ENCODE measurements at regions of chr11 and their contacts with region 1.

Region 1: DNA sequence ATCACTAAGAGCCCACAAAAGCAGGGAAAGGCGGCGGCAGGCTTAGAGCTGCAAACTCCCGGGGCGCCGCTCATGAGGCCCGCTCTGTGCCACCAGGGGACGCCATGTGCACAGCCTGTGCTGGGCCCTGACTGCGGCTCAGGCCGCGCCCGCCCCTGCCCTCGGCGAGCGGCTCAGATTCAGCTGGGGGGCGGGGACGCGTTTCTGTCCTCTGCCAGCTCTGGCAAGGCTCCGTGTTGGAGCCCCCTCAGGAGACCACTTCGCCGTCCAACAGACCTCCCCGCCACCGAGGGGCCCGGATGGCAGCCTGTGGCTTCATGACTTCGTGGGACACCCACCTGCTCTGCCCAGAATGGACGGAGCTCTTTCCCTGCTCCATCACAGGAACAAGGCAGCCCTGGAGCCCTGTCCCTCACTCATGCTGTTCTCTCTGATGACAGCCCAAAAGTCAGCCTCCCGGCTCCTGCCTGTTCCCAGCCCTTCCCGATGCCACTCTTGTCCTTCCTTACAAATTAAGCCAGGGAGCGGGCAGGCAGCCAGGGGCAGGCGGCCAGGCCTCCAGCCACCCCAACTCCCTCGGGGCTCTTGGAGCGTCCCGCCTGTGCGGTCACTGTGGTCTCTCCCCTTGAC is 69.1 kb downstream of the NAT10 start:
- DNase-seq: peak; percentile 76
- ATAC-seq: peak; percentile 100
- H3K4me3 ChIP-seq: peak overlapping the region; percentile 58; the same call in 1 of the 2 replicates
- H3K27ac ChIP-seq: no peak overlapping the region
- H3K4me1 ChIP-seq: peaks cover 11% of the 10 kb centered on the region; the same call in 1 of the 2 replicates
- H3K27me3 ChIP-seq: no peaks in the 10 kb centered on the region
- CTCF ChIP-seq: peak; percentile 79

Region 2: DNA sequence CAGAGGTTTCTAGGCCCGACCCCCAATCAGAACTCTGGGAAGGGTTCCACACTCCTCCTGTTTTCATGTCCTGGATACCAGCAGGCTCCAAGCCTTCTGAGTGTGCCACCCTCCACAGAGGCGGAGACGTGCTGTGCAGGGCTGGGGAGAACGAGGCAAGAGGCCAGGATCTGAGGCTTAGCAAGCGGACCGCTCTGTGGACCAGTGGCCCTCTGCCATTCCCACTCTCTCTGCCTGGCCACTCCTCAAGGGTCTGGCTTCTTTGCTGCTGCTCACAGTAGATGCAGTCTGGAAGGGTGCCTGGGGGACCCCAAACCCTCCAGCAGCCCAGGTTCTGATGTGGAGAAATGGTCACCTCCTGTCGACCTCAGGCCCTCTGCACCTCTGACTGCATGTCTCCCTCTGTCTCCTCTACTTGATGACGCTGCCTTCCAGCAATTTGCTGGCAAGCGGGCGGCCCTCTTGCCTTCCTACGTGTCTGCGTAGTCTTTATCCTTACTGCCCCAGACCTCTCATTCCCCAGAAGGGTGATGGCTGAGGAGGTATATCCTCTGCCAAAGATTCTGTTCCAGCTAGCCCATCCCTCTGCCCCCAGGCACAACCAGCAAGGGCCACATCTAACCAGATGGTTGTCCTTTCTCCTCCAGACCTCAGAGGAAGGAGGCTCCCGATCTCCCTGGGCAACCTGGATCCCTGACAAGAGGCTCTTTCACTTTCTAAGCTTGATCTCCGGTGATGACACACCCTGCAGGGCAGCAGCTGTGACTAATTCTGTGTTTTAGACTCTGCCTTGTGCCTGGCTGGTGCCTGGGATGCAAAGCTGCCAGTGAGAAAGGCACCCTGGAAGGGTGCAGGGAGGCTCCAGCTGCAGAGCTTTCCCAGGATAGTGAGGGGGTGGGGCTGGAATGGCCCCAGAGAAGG is 18.2 kb after region 1 on chr11:
- CTCF ChIA-PET with region 1: interaction called, 12 read pairs
- POLR2A ChIA-PET with region 1: interaction called, 3 read pairs
- intact Hi-C with region 1: no loop called
- DNase-seq: peak; percentile 91
- ATAC-seq: peak; percentile 93
- H3K4me3 ChIP-seq: peak overlapping the region; percentile 1; the same call in 1 of the 2 replicates
- H3K27ac ChIP-seq: peak overlapping the region; percentile 53
- H3K4me1 ChIP-seq: peaks cover 31% of the 10 kb centered on the region
- H3K27me3 ChIP-seq: no peaks in the 10 kb centered on the region
- CTCF ChIP-seq: no peak

Region 3: DNA sequence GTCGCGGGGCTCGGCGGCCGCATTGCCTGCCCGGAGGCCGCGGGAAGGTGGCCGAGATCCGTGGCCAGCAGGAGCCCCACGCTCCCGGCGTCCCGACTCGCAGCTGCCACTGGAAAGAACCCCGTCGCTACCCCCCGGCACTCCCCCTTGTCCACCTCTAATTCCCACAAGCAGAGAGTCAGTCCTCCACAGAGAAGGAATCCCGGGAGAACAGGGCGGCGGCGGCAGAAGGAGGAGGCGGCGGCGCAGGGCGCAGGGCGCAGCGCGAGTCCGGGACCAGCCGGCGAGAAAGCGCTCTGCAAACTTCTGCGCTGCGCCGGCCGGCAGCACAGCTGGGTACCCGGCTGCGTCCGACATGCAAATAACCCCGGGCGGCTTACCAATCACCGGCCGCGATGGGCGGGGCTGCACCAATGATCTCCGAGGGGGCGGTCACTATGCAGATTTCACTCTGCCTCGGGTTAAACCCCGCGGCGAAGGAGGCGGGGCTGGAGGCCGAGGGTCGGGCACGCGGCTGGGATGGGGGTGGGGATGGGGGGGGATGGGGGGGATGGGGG is 183.3 kb after region 1 on chr11 and contains the start of gene ABTB2:
- CTCF ChIA-PET with region 1: interaction called, 29 read pairs
- POLR2A ChIA-PET with region 1: interaction called, 13 read pairs
- intact Hi-C with region 1: loop called (anchors 1 kb)
- DNase-seq: peak; percentile 97
- ATAC-seq: peak; percentile 76
- H3K4me3 ChIP-seq: peak within 1 kb of the TSS; percentile 86
- H3K27ac ChIP-seq: peak within 1 kb of the TSS; percentile 41
- H3K4me1 ChIP-seq: peaks cover 24% of the 10 kb centered on the region
- H3K27me3 ChIP-seq: no peaks in the 10 kb centered on the region
- CTCF ChIP-seq: no peak
- total RNA-seq, gene ABTB2: 5.2 and 10.0 TPM in 2 replicates

Region 4: GRCh38 chr11:34640050-34640923 is 465.8 kb after region 1 on chr11:
- CTCF ChIA-PET with region 1: no interaction called
- POLR2A ChIA-PET with region 1: interaction called, 11 read pairs
- intact Hi-C with region 1: no loop called
- DNase-seq: peak; percentile 95
- ATAC-seq: peak; percentile 85
- H3K4me3 ChIP-seq: peak overlapping the region; percentile 20; the same call in 1 of the 2 replicates
- H3K27ac ChIP-seq: peak overlapping the region; percentile 97
- H3K4me1 ChIP-seq: peaks cover 70% of the 10 kb centered on the region
- H3K27me3 ChIP-seq: no peaks in the 10 kb centered on the region
- CTCF ChIP-seq: no peak

Region 5: DNA sequence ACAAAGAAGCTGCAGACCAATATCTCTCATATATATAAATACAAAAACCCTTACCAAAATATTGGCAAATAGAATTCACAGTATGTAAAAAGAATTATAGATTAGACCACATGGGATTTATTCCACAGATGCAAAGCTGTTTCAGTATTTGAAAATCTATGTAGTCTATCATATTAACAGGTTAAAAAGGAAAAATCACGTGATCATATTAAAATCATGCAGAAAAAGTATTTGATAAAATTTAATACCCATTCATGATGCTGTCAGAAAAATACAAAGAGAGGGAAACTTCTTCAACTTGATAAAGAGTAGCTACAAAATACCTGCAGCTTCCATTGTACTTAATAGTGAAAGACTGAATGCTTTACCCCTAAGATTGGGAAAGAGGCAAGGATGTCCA is 897.2 kb after region 1 on chr11:
- CTCF ChIA-PET with region 1: interaction called, 13 read pairs
- POLR2A ChIA-PET with region 1: no interaction called
- intact Hi-C with region 1: no loop called
- DNase-seq: no peak
- ATAC-seq: no peak
- H3K4me3 ChIP-seq: no peak overlapping the region
- H3K27ac ChIP-seq: no peak overlapping the region
- H3K4me1 ChIP-seq: peaks cover 7% of the 10 kb centered on the region
- H3K27me3 ChIP-seq: no peaks in the 10 kb centered on the region
- CTCF ChIP-seq: no peak